GM12878 (cell line): ENCODE measurements at regions of chr1 and their contacts with region 1.

Region 1: DNA sequence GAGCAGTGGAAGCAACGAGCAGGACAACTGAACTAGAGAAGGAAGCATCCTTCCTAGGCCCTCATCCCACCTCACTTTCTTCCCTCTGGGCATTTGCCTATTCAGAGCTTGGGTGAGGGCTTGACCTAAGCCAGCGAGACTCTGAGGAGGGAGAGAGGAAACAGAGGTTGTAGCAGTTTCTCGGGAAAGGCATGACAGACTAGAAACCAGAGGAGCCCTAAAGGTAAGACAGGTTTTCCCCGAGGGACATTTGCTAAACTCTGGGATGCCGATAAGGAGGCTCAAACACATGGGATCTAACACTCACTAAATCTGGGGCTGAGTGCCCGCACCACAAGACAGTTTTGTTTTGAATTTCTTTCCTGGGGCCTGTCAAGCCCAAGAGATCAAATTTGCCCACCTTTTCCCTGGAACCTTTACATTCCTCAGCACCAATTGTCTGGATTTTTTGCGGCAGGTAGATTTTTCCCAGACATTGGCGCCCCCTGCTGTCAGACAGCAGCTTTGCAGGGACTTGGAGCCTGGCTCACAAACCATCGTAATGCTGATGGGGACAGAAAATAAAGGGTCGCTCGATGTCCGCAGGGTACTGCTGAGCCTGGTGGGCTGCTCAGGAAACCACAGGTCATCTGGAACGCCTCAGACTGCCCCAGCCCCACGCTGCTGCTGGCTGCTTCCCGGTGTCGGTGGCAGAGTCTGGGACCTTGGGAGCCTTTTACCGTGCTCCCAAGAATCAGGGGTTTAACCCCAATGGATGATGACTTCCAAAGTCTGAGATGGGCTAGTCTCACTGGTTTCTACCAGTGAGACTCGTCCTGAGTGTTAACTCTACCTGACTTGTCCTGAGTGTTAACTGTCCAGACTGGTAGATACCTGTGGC is 23.4 kb upstream of the TSPAN2 start:
- DNase-seq: no peak
- ATAC-seq: peak; percentile 70
- H3K4me3 ChIP-seq: no peak overlapping the region
- H3K27ac ChIP-seq: no peak overlapping the region
- H3K4me1 ChIP-seq: no peaks in the 10 kb centered on the region
- H3K27me3 ChIP-seq: no peaks in the 10 kb centered on the region; a peak in 1 of 4 replicates
- CTCF ChIP-seq: peak; percentile 77 to 95 (median 90)
- EP300 ChIP-seq: no peak
- POLR2A ChIP-seq: no peak
- RAD21 ChIP-seq: peak; percentile 83

Region 2: GRCh38 chr1:114979278-114979891 is 133.4 kb before region 1 on chr1:
- CTCF ChIA-PET with region 1: interaction called, 70 read pairs
- POLR2A ChIA-PET with region 1: interaction called, 4 read pairs
- RAD21 ChIA-PET with region 1: interaction called, 34 read pairs
- SMC1A ChIA-PET with region 1: interaction called, 58 read pairs
- in situ Hi-C with region 1: loop called (anchors 5 kb)
- intact Hi-C with region 1: loop called (anchors 1 kb)
- DNase-seq: peak; percentile 13
- ATAC-seq: peak; percentile 72
- H3K4me3 ChIP-seq: no peak overlapping the region
- H3K27ac ChIP-seq: no peak overlapping the region
- H3K4me1 ChIP-seq: no peaks in the 10 kb centered on the region
- H3K27me3 ChIP-seq: no peaks in the 10 kb centered on the region
- CTCF ChIP-seq: peak; percentile 60 to 70 (median 65); a peak in 5 of 6 replicates
- EP300 ChIP-seq: no peak
- POLR2A ChIP-seq: no peak
- RAD21 ChIP-seq: peak; percentile 73

Region 3: DNA sequence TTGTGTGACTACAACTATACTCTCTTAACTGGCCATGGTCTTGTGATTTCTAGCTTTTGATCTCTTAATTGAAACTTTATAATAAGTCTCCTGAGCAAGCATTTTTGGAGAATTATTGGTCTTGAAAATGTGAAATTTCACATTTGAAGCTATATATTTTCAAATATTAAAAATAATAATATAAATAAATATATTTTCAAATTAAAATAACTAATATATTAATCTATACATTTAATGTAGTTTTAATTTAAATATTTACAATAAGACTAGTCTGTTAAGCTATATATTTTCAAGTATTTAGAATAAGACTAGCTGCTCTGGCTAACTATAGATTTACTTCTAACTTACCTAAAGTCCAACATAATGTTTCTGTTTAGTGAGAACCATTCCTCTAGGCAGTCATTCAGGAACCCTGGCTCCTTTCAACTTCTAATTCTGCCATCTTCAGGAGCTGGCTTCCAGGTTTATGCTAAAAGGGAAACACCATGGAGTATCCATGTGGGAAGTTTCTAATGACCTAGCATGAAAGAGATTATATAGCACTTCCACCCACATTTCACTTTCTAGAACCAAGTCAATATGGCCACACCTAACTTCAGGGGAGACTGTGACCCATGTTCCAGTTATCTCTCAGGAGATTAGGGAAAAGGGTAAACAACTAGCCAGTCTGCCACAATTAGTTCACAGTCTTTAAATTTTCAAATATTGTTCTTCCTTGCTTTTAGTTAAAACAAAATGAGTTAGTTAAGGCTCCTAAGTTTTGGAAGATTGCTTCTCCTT is 115.0 kb before region 1 on chr1:
- CTCF ChIA-PET with region 1: interaction called, 14 read pairs
- POLR2A ChIA-PET with region 1: no interaction called
- RAD21 ChIA-PET with region 1: no interaction called
- SMC1A ChIA-PET with region 1: interaction called, 3 read pairs
- in situ Hi-C with region 1: no loop called
- intact Hi-C with region 1: no loop called
- DNase-seq: no peak
- ATAC-seq: no peak
- H3K4me3 ChIP-seq: no peak overlapping the region
- H3K27ac ChIP-seq: no peak overlapping the region
- H3K4me1 ChIP-seq: no peaks in the 10 kb centered on the region
- H3K27me3 ChIP-seq: no peaks in the 10 kb centered on the region
- CTCF ChIP-seq: no peak
- EP300 ChIP-seq: no peak
- POLR2A ChIP-seq: no peak
- RAD21 ChIP-seq: no peak

Region 4: GRCh38 chr1:115089420-115090185 is 23.1 kb before region 1 on chr1 and contains the start of gene TSPAN2:
- CTCF ChIA-PET with region 1: interaction called, 12 read pairs
- POLR2A ChIA-PET with region 1: no interaction called
- RAD21 ChIA-PET with region 1: interaction called, 6 read pairs
- SMC1A ChIA-PET with region 1: interaction called, 8 read pairs
- in situ Hi-C with region 1: no loop called
- intact Hi-C with region 1: no loop called
- DNase-seq: no peak
- ATAC-seq: peak; percentile 79
- H3K4me3 ChIP-seq: no peak within 1 kb of the TSS
- H3K27ac ChIP-seq: no peak within 1 kb of the TSS
- H3K4me1 ChIP-seq: no peaks in the 10 kb centered on the region
- H3K27me3 ChIP-seq: peaks cover 5 to 13% of the 10 kb centered on the region in 2 experiments
- CTCF ChIP-seq: no peak; a peak in 1 of 6 replicates
- EP300 ChIP-seq: no peak
- POLR2A ChIP-seq: no peak
- RAD21 ChIP-seq: no peak
- polyA plus RNA-seq, gene TSPAN2: not detected

Region 5: DNA sequence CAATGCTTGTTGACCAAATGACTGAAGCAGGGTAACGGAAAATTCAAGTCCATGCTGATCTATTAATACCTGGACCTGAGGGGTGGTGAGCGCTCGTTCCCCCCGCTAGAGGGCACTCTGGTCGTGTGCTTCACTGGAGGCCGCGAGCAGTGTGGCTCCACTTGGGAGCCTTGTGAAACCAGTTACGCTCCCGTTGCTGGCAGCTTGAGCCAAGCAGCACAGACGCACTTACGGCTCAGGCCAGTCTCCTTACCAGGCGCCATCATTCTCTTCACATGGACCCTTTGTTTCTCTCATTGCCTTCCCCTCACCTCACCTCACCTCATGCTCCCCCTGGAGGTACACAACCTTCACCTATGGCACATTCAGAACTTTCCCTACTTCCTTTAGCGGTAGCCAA is 26.2 kb after region 1 on chr1:
- CTCF ChIA-PET with region 1: interaction called, 16 read pairs
- POLR2A ChIA-PET with region 1: no interaction called
- RAD21 ChIA-PET with region 1: no interaction called
- SMC1A ChIA-PET with region 1: interaction called, 4 read pairs
- in situ Hi-C with region 1: no loop called
- intact Hi-C with region 1: no loop called
- DNase-seq: peak; percentile 9
- ATAC-seq: peak; percentile 100
- H3K4me3 ChIP-seq: no peak overlapping the region
- H3K27ac ChIP-seq: no peak overlapping the region
- H3K4me1 ChIP-seq: no peaks in the 10 kb centered on the region
- H3K27me3 ChIP-seq: no peaks in the 10 kb centered on the region; a peak in 1 of 4 replicates
- CTCF ChIP-seq: peak; percentile 85 to 88 (median 86); a peak in 5 of 6 replicates
- EP300 ChIP-seq: no peak
- POLR2A ChIP-seq: no peak
- RAD21 ChIP-seq: peak; percentile 77